ENCODE measurements at regions of chr2 and their contacts with region 1.

Region 1: DNA sequence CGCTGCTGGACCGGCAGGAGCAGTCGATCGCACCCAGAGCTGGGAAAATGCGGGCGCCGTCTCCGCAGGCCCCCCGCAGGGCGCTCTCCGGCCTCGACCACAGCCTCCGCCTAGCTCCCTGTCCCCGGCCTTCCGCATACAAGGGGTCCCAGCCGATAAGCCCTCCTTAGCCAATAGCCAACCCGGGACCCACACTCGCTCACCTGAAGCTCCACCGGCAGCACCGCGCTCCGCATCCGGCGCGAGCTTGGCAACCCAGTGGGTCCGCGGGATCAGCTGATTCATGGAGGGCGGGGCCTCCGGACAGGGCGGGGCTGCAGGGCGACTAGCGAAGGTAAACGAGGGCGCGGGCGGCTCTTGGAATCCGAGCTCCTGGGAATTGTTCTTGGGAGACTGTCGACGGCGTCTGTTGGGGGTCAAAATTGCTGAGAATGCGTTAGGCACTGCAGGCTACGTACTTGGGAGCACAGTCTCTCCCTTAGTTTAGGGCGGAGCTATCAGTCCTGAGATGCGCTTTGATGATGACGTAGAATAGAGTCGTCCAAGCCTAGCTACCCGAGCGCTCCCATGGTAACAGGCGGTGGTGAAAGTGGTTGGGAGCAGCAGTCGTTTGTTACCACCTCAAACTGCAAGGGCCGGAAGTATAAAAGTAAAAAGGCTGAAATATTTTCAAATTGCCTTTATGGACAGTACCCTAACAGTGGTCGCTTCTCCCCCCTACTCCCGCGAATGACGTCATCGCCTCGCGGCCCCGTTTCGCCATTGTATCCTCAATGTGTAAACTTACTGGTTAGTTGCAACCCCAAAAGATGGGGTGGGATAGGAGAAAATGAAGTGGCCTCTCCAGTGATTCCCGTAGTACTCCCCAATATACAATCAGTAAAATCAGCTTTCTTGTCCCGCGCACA is at the start of gene ALS2:
- DNase-seq: peak; percentile 92
- H3K4me3 Mint-ChIP-seq: peak within 1 kb of the TSS; percentile 95
- H3K27ac Mint-ChIP-seq: peak within 1 kb of the TSS; percentile 92
- H3K4me1 Mint-ChIP-seq: peaks cover 31% of the 10 kb centered on the region
- H3K27me3 Mint-ChIP-seq: peaks cover 24% of the 10 kb centered on the region
- total RNA-seq, gene ALS2: 11.7 and 12.7 TPM in 2 replicates

Region 2: DNA sequence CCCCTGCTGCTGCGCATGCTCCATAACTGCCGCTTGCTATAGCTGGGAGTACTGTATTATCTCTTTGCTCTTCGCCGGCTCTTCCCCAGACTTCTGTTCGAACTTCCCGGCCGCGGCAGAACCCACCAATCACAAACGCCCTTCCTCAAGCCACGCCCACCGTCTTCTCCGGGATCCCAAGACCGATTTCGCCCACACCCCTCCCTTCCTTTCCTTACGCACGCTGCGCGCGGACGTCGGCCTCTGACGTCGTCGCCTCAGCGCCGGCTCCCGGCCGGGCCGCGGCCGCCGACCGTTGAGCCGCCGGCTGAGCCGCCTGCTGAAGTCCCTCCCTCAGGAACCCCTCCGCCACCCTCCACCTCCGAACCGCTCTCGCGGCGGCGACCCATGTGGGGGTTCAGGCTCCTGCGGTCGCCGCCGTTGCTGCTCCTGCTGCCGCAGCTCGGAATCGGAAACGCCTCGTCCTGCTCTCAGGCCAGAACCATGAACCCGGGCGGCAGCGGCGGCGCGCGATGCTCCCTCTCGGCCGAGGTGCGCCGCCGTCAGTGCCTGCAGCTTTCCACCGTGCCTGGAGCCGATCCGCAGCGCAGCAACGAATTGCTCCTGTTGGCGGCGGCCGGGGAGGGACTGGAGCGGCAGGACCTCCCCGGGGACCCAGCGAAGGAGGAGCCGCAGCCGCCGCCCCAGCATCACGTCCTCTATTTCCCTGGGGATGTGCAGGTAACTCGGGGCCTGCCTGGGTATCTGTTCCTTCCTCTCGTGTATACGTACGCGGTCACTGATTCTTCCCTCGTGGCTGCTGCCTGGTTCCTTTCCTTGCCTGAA is 1869.7 kb before region 1 on chr2 and contains the start of gene C2orf69:
- intact Hi-C with region 1: loop called (anchors 5 kb)
- DNase-seq: peak; percentile 86
- H3K4me3 Mint-ChIP-seq: peak within 1 kb of the TSS; percentile 100
- H3K27ac Mint-ChIP-seq: peak within 1 kb of the TSS; percentile 99
- H3K4me1 Mint-ChIP-seq: peaks cover 39% of the 10 kb centered on the region
- H3K27me3 Mint-ChIP-seq: peaks cover 3% of the 10 kb centered on the region
- total RNA-seq, gene C2orf69: 16.6 and 18.0 TPM in 2 replicates

Region 3: DNA sequence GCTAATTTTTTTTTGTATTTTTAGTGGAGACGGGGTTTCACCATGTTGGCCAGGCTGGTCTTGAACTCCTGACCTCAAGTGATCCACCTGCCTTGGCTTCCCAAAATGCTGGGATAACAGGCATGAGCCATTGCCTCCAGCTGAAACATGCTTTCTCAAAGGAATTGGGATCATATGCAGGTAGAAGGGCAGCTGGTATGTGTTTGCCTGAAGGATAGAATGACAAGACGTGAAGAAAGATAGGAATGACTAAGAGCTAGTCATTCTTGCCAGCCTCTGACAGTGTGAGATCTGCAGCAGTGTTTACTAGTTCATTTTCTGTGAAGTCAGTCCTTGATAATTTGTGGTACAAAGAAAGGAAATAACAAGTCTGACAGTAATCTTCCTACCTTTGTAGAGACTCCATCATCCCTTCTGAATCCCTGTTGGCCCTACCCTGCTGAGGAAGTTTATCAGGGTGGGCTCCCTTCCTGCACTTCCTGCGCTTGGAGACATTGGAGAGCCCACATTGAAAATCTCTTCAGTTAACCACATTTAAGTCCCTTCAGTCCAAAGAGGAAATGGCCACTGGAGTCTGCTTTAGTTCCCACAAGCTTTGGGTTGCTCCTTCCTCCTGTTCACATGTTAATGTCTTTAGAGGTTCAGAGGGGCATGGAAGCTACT is 650.3 kb before region 1 on chr2:
- intact Hi-C with region 1: loop called (anchors 5 kb)
- DNase-seq: peak; percentile 45
- H3K4me3 Mint-ChIP-seq: peak overlapping the region; percentile 90
- H3K27ac Mint-ChIP-seq: peak overlapping the region; percentile 99
- H3K4me1 Mint-ChIP-seq: peaks cover 56% of the 10 kb centered on the region
- H3K27me3 Mint-ChIP-seq: no peaks in the 10 kb centered on the region

Region 4: DNA sequence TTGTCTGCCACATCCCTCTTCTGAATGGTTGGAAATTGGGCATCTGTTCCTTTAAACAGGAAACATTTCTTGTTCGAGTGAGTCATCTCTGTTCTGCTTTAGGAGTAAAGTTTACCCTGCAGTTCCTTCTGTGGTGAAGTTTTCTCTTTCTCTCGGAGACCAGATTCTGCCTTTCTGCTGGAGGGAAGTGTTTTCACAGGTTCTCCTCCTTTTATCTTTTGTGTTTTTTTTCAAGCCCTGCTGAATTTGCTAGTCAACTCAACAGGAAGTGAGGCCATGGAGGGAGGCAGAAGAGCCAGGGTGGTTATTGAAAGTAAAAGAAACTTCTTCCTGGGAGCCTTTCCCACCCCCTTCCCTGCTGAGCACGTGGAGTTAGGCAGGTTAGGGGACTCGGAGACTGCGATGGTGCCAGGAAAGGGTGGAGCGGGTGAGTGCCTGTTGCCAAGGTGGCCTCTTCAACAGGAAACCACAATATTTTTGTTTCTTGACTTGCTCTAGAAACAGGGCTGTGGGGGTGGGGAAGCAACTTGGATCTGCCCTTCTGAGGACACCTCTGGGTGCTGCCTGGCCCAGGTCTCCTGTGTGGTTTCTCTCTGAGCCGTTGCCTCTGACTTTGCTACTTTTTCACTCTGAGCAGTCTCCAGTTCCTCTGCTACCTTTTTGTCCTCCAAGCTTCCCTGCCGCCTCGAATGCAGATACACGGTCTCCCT is 522.8 kb before region 1 on chr2:
- intact Hi-C with region 1: loop called (anchors 5 kb)
- DNase-seq: peak; percentile 93
- H3K4me3 Mint-ChIP-seq: peak overlapping the region; percentile 91
- H3K27ac Mint-ChIP-seq: peak overlapping the region; percentile 100
- H3K4me1 Mint-ChIP-seq: peaks cover 84% of the 10 kb centered on the region
- H3K27me3 Mint-ChIP-seq: no peaks in the 10 kb centered on the region

Region 5: DNA sequence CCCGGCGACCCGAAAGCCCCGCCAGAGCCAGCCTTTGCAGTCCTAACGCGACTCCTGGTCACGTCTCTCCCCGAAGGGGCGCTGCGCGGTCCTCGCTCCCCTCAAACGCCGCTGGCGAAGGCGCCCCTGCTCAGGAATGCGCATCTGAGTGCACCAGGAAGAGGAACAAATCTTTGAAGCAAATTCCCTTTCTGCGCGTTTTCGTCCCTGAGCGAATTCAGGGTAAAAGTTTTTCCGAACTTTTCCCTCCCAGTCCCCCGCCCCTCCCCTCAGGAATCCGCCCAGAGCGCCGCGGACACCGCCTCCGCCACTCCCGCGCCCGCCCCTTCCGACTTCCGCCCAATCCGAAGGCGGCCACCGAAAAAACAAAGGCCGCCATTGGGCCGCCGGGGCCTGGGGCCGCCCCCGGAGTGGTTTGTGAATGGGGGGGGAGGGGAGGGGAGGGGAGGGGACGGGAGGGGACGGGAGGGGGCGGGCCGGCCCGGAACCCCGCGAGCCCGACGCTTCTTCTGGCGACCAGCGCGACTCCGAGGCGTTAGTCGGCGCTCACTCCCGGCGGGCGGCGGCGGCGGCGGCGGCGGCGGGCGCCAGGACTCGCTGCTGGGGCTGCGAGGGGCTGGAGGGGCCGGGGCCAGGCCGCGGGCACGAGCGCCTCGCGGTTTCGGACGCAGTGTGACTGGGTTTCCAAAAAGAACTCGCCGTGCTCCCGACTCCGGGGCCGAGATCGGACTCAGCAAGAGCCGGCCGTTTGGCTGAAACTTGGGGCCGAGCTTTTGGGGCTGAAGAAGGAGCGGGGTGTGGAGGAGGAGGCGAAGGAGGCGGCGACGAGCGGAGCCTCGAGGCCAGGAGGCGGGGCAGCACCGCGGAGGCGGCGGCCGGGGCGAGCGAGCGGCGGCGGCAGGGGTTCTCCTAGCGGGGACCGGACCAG is 252.7 kb after region 1 on chr2 and contains the start of gene FZD7:
- intact Hi-C with region 1: loop called (anchors 2 kb)
- DNase-seq: peak; percentile 83
- H3K4me3 Mint-ChIP-seq: peak within 1 kb of the TSS; percentile 89
- H3K27ac Mint-ChIP-seq: peak within 1 kb of the TSS; percentile 63
- H3K4me1 Mint-ChIP-seq: peaks cover 12% of the 10 kb centered on the region
- H3K27me3 Mint-ChIP-seq: peaks cover 44% of the 10 kb centered on the region
- total RNA-seq, gene FZD7: 1.2 and 1.5 TPM in 2 replicates

Region 6: GRCh38 chr2:202265467-202266277 is 484.7 kb after region 1 on chr2 and contains the start of gene NOP58:
- intact Hi-C with region 1: loop called (anchors 1 kb)
- DNase-seq: peak; percentile 91
- H3K4me3 Mint-ChIP-seq: peak within 1 kb of the TSS; percentile 55
- H3K27ac Mint-ChIP-seq: peak within 1 kb of the TSS; percentile 45
- H3K4me1 Mint-ChIP-seq: peaks cover 19% of the 10 kb centered on the region
- H3K27me3 Mint-ChIP-seq: no peaks in the 10 kb centered on the region
- total RNA-seq, gene NOP58: 227 and 241 TPM in 2 replicates

Region 7: DNA sequence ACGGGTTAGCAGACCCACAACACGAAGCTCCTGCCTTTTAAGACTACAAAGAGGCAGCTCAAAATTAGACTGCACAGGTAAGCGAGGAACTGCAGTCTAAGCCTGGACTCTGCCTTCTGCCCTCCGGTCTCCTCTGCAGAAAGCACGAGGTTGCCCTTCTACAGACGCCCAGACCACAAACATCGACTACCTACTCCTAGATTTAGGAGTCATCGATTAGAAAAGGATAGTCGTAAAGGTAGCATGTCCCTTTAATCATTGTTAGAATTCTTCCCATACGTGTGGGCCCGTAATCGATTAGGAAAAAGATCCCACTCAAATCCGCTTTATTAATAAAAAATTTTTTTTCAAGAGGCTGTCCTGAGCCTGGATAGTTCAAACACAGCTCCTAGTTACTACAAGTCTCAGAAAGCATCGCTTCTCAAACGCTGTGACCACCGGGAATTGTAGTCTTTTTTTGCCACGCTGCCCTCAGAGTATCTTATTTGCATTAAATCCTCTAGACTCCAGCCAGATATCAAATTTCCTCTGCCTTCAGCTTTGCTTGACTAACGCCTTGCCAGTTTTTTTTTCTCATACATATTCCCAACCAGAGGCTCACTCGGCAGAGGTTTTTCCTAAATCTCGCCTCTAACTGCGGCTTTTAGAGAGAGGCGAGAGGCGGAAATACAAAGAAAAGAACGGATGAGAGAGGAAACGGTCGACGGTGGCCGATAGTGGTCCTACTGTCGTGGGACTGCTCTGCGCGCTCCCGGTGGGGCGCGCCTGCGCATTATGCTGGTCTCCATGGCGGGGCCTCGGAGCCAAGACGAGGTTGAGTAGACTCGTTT is 1130.8 kb after region 1 on chr2 and contains the starts of genes CARF and WDR12:
- intact Hi-C with region 1: loop called (anchors 5 kb)
- DNase-seq: peak; percentile 87
- H3K4me3 Mint-ChIP-seq: peak within 1 kb of the TSS; percentile 96
- H3K27ac Mint-ChIP-seq: peak within 1 kb of the TSS; percentile 98
- H3K4me1 Mint-ChIP-seq: peaks cover 31% of the 10 kb centered on the region
- H3K27me3 Mint-ChIP-seq: no peaks in the 10 kb centered on the region
- total RNA-seq, gene CARF: 3.6 and 4.3 TPM in 2 replicates
- total RNA-seq, gene WDR12: 149 and 165 TPM in 2 replicates

Measured in activated T-helper 1 cell treated with anti-CD3 and anti-CD28 coated beads, Interleukin-12 subunit alpha, Interleukin-12 subunit beta, Interleukin-2, Interleukin-4 antibody, amounts not matched to agents 30 ng/mL and 10 ng/mL and 1 ng/mL, durations not matched to agents 14 hours and 24 hours and 36 hours (primary cell).